ENCODE measurements at regions of chr3 and their contacts with region 1.

Region 1: DNA sequence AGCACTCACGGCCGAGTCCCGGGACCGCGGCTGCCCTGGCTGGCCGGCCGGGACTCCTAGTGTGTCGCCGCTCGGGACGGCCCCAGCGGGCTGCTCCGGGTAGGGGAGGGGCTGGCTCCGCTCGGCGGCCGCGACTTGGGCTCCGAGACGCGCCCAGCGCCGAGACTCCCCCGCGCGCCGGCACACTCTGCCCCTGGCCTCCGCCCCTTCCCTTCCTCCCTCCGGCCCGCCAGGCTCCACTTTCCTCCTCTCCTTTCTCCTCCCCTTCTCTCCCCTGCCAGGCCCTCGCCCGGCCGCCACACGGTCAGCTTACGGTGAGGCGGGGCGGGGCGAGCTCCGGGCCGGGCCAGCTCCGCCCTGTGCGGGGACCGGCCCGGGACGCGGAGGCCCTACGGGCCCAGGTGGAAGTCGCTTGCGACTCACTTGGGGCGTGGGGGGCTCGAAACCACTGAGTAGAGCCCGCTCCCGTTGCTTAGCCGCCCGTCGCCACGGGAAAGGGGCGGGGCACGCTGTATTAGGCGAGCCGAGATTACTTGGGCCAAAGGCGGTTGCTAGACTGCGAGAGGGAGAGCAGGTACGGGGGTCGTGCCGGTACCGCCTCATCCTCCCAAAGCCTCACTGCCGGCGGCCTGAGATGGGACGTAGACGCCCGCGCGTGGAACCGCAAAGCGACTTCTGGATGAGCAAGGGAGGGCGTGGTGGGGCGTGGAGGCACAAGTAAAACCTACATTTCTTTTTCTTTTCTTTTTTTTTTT is at the start of gene ITGB5:
- DNase-seq: peak; percentile 80 to 86
- ATAC-seq: peak; percentile 81 to 91 (median 87)
- H3K4me3 ChIP-seq: peak within 1 kb of the TSS; percentile 45 to 98 (median 84)
- H3K27ac ChIP-seq: peak within 1 kb of the TSS; percentile 81 to 98 (median 93)
- H3K4me1 ChIP-seq: peaks cover 18 to 44% (median 36%) of the 10 kb centered on the region in 9 donors
- H3K27me3 ChIP-seq: peaks cover 0 to 37% (median 0%) of the 10 kb centered on the region in 7 donors
- CTCF ChIP-seq: no peak
- total RNA-seq, gene ITGB5: 72.2 to 154 (median 108) TPM

Region 2: DNA sequence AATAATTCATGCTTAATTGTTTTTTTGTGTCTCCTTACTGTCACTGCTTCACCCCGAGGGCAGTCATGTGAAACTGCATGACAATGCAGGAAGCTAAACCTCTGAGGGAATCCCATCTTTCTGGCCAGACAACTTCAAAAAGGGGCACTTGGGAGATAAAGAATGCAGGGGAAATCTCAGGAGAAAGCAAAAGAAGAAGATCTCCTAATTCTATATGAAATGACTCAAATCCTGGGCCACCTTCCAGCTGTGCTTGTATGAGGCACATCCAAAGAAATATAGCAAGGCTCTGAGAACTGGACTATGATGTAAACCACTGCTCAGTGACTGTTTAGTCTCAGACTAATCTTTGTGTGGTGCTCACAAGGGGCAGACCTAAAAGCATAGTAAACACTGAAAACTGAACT is 179.7 kb before region 1 on chr3:
- intact Hi-C with region 1: no loop called
- DNase-seq: no peak
- ATAC-seq: no peak
- H3K4me3 ChIP-seq: no peak overlapping the region
- H3K27ac ChIP-seq: no peak overlapping the region
- H3K4me1 ChIP-seq: no peaks in the 10 kb centered on the region
- H3K27me3 ChIP-seq: peaks cover 0 to 20% (median 0%) of the 10 kb centered on the region in 7 donors
- CTCF ChIP-seq: no peak

Region 3: GRCh38 chr3:124772081-124772831 is 115.1 kb before region 1 on chr3:
- intact Hi-C with region 1: loop called in 2 of 10 experiments (anchors 5 kb)
- DNase-seq: peak; percentile 47 to 70
- ATAC-seq: peak; percentile 7 to 65 (median 54)
- H3K4me3 ChIP-seq: no peak overlapping the region
- H3K27ac ChIP-seq: peak overlapping the region; percentile 2 to 83 (median 66)
- H3K4me1 ChIP-seq: peaks cover 17 to 83% (median 71%) of the 10 kb centered on the region in 9 donors
- H3K27me3 ChIP-seq: no peaks in the 10 kb centered on the region
- CTCF ChIP-seq: no peak

Region 4: DNA sequence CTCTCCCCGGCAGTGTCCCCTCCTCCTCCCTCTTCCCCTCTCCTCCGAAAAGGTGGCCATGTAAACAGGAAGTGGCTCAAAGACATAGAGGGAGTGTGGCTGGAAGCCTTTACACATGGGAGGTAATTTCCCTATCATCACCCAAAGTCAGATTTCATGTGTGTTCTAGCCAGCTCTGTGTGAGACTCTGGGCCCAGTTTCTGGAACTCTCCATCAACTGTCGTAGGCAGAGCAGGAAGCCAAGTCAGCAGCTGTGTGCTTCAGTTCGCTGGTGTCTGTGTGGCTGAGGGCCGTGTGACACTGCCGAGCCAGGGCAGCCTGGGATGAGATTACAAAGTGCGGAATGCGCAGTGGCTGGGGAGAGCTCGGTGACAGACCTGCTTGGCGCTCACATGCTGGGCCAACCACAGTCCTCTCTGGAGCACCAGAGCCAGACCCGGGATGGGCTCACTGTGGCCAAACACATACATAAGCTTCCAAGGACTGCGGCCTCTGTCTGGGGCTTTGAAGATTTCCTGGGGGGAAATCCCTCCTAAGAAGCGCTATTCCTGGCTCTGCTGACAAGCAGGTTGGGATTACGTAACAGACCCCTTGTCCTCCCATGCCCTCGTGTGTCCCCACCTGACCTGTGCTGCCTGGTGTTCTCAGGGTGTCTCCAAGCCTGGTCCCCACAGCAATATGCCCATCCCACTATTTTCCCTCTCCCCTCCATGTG is 106.4 kb before region 1 on chr3:
- intact Hi-C with region 1: loop called in 7 of 10 experiments (anchors 5 kb)
- DNase-seq: peak; percentile 83 to 89
- ATAC-seq: peak; percentile 86 to 92 (median 90)
- H3K4me3 ChIP-seq: peak overlapping the region in 3 of 10 donors; percentile 0 to 16 (median 10)
- H3K27ac ChIP-seq: peak overlapping the region; percentile 67 to 97 (median 90)
- H3K4me1 ChIP-seq: peaks cover 38 to 90% (median 71%) of the 10 kb centered on the region in 9 donors
- H3K27me3 ChIP-seq: no peaks in the 10 kb centered on the region
- CTCF ChIP-seq: no peak

Region 5: DNA sequence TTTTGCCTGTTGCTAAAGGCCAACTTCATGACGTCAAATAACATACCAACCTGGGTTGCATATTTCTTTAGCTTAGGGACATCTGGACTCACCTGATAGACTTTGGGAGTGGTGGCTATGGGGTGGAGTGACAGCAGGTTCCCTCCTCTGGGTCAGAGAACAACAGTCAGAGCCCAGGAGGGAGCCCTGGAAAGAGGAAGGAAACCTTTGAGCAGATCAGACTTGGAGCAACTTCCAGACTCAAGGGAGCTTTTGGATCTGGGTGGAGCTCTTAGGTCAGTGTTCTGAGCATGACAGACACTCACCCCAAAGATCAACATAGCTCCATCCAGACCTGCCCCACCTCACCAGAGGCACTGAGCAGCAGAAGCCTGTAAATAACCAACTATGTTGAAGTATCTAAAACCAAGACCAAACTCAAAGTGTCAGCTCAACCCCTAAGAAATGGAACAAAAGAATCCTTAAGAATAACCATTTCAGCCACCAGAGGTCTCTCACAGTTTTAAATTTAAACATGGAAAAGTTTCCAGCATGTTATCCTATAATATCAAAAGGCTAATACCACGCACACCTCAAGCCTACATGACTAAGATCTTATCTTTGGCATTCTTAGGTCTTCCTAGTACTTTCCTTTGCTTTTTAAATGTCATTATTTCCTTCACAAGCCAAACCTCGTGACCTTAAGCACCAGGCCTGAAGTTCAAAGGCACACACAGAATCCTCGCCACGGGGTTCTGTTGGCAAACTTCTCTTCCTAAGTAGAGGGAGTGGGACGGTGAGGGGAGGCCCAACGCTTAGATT is 100.7 kb before region 1 on chr3:
- intact Hi-C with region 1: loop called in 6 of 10 experiments (anchors 5 kb)
- DNase-seq: no peak
- ATAC-seq: peak; percentile 6 to 64 (median 47)
- H3K4me3 ChIP-seq: no peak overlapping the region
- H3K27ac ChIP-seq: peak overlapping the region; percentile 28 to 80 (median 70)
- H3K4me1 ChIP-seq: peaks cover 35 to 83% (median 69%) of the 10 kb centered on the region in 9 donors
- H3K27me3 ChIP-seq: no peaks in the 10 kb centered on the region
- CTCF ChIP-seq: peak in 8 of 9 donors; percentile 23 to 68 (median 51)

Region 6: GRCh38 chr3:124834723-124835718 is 52.3 kb before region 1 on chr3:
- intact Hi-C with region 1: loop called in 6 of 10 experiments (anchors 2 to 10 kb)
- DNase-seq: peak in 1 of 2 donors; percentile 70
- ATAC-seq: peak in 7 of 8 donors; percentile 22 to 60 (median 48)
- H3K4me3 ChIP-seq: peak overlapping the region in 3 of 10 donors; percentile 2 to 4 (median 3)
- H3K27ac ChIP-seq: peak overlapping the region; percentile 32 to 83 (median 77)
- H3K4me1 ChIP-seq: peaks cover 34 to 99% (median 82%) of the 10 kb centered on the region in 9 donors
- H3K27me3 ChIP-seq: no peaks in the 10 kb centered on the region
- CTCF ChIP-seq: no peak

Region 7: DNA sequence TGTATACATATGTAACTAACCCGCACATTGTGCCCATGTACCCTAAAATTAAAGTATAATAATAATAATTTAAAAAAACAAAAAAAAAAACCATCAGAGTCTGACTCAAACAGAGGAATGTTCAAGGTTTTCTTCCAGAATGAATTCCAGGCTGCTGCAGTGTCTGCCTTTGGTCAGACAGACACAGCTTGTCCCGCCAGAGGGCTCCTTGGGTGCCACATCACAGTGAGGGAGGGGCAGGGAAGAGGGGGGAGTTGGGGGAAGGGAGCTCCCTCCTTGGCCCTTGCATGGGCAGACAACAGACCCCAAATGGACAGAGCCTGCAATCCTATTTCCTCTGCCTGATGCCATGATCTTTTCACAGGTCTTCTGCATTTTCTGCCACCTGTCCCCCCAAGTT is 36.7 kb before region 1 on chr3:
- intact Hi-C with region 1: loop called in 1 of 10 experiments (anchors 5 kb)
- DNase-seq: no peak
- ATAC-seq: peak in 4 of 8 donors; percentile 43 to 78 (median 58)
- H3K4me3 ChIP-seq: no peak overlapping the region
- H3K27ac ChIP-seq: peak overlapping the region in 4 of 10 donors; percentile 20 to 53 (median 41)
- H3K4me1 ChIP-seq: peaks cover under 1 to 40% (median 15%) of the 10 kb centered on the region in 9 donors
- H3K27me3 ChIP-seq: no peaks in the 10 kb centered on the region
- CTCF ChIP-seq: no peak